OCI-LY7 (cell line): ENCODE measurements at regions of chr7 and their contacts with region 1.

Region 1: GRCh38 chr7:148084138-148084537 is 506.4 kb upstream of the C7orf33 start:
- DNase-seq: peak; percentile 36
- H3K4me3 ChIP-seq: no peak overlapping the region
- H3K27ac ChIP-seq: no peak overlapping the region
- H3K4me1 ChIP-seq: no peaks in the 10 kb centered on the region
- CTCF ChIP-seq: peak; percentile 79

Region 2: GRCh38 chr7:147245292-147245691 is 838.8 kb before region 1 on chr7:
- CTCF ChIA-PET with region 1: no interaction called
- POLR2A ChIA-PET with region 1: no interaction called
- intact Hi-C with region 1: loop called (anchors 5 kb)
- DNase-seq: peak; percentile 47
- H3K4me3 ChIP-seq: no peak overlapping the region
- H3K27ac ChIP-seq: no peak overlapping the region
- H3K4me1 ChIP-seq: no peaks in the 10 kb centered on the region
- CTCF ChIP-seq: peak; percentile 85